ENCODE measurements at regions of chr5 and their contacts with region 1.

Region 1: DNA sequence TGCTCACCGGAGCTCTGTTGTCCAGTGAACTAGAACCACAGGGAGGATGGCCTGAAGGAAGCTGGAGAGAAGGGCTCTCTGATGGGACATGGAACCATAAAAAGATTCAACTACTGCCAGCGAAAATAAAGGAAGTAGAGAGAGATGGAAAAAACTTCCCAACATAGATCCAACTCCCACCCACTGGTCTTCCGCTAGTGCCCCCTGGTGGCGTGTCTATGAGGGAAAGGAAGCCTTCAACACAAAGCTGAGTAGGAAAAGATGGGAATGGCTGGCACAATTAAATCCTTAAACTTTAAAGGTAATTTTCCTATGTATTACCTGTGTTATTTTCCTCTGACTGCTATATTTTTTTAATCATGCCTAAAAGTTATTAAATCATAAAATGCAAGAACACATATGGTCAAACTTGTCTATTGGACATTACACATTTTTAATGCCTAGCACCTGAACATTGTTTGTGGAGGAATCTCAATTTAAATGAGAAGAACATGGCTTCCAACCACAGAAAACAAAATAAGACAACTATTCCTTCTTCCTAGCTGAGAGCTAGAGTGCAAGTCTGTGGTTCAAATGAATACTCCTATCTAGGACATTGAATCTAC is 51.5 kb downstream of the CEP120 start:
- DNase-seq: peak; percentile 22
- ATAC-seq: peak; percentile 75
- H3K4me3 ChIP-seq: no peak overlapping the region
- H3K27ac ChIP-seq: no peak overlapping the region
- H3K4me1 ChIP-seq: no peaks in the 10 kb centered on the region
- H3K27me3 ChIP-seq: no peaks in the 10 kb centered on the region
- CTCF ChIP-seq: peak; percentile 59
- EP300 ChIP-seq: no peak
- POLR2A ChIP-seq: no peak
- RAD21 ChIP-seq: no peak

Region 2: DNA sequence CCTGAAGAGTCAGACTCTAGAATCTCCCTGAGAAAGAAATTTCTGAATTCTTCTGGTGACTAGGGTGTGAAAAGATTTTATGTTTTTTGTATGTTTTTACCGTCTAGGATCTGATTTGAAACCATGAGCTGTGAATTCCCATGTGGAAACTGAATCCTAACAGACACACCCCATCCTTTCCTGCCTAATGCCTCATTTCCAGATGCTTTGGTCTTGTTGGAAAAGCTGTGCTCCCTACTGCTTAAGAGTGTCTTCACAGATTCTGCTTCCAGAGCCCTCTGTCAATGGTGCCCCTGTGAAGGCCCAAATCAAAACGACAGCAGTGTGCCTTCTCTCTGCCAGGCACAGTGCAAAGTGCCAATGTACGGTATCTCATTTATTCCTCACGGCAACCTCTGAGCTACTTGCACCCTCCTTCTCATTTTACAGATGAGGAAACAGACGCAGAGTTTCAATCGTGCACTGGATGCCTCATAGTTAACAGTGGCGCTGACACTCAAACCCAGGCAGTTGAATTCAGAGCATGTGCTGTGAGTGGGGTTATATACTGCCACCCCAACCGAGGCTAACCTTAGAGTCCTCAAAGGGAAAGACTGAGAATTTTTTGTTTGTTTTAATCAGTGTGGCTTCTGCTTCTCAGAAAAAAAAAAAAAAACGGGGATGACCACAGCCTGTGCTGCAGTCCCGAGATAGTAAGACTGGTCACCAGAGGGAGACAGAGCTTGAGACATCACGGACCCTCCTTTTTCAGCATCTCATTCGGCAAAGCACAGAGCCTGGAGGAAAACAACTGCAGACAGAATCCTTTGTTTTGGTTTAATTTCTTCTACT is 871.2 kb before region 1 on chr5:
- CTCF ChIA-PET with region 1: interaction called, 3 read pairs
- POLR2A ChIA-PET with region 1: no interaction called
- in situ Hi-C with region 1: no loop called
- intact Hi-C with region 1: loop called (anchors 5 kb)
- DNase-seq: peak; percentile 26
- ATAC-seq: peak; percentile 93
- H3K4me3 ChIP-seq: no peak overlapping the region
- H3K27ac ChIP-seq: no peak overlapping the region
- H3K4me1 ChIP-seq: peaks cover 10% of the 10 kb centered on the region; the same call in 1 of the 2 replicates
- H3K27me3 ChIP-seq: no peaks in the 10 kb centered on the region
- CTCF ChIP-seq: peak; percentile 64
- EP300 ChIP-seq: no peak
- POLR2A ChIP-seq: no peak
- RAD21 ChIP-seq: no peak

Region 3: GRCh38 chr5:122896598-122897282 is 474.9 kb before region 1 on chr5:
- CTCF ChIA-PET with region 1: interaction called, 3 read pairs
- POLR2A ChIA-PET with region 1: no interaction called
- in situ Hi-C with region 1: no loop called
- intact Hi-C with region 1: loop called (anchors 1 kb)
- DNase-seq: peak; percentile 9
- ATAC-seq: no peak
- H3K4me3 ChIP-seq: no peak overlapping the region
- H3K27ac ChIP-seq: no peak overlapping the region
- H3K4me1 ChIP-seq: no peaks in the 10 kb centered on the region
- H3K27me3 ChIP-seq: no peaks in the 10 kb centered on the region
- CTCF ChIP-seq: peak; percentile 54
- EP300 ChIP-seq: no peak
- POLR2A ChIP-seq: no peak
- RAD21 ChIP-seq: no peak; the same call in 1 of the 2 replicates

Region 4: GRCh38 chr5:123610665-123611405 is 239.2 kb after region 1 on chr5:
- CTCF ChIA-PET with region 1: no interaction called
- POLR2A ChIA-PET with region 1: no interaction called
- in situ Hi-C with region 1: no loop called
- intact Hi-C with region 1: loop called (anchors 2 kb)
- DNase-seq: peak; percentile 54
- ATAC-seq: peak; percentile 61
- H3K4me3 ChIP-seq: no peak overlapping the region
- H3K27ac ChIP-seq: no peak overlapping the region
- H3K4me1 ChIP-seq: no peaks in the 10 kb centered on the region
- H3K27me3 ChIP-seq: no peaks in the 10 kb centered on the region
- CTCF ChIP-seq: peak; percentile 76
- EP300 ChIP-seq: no peak
- POLR2A ChIP-seq: no peak
- RAD21 ChIP-seq: peak; percentile 76